H1 (cell line): ENCODE measurements at regions of chr15 and their contacts with region 1.

Region 1: GRCh38 chr15:100341662-100342560 is at the start of gene ADAMTS17:
- DNase-seq: peak; percentile 87 to 91
- H3K4me3 ChIP-seq: peak within 1 kb of the TSS; percentile 32 to 82 (median 46)
- H3K27ac ChIP-seq: no peak within 1 kb of the TSS
- H3K4me1 ChIP-seq: peaks cover 0 to 6% (median 4%) of the 10 kb centered on the region in 4 experiments; a peak in 6 of 7 replicates
- H3K27me3 ChIP-seq: peaks cover 17 to 30% (median 26%) of the 10 kb centered on the region in 4 experiments
- CTCF ChIP-seq: peak; percentile 77 to 85 (median 82)
- EP300 ChIP-seq: peak in 1 of 2 experiments; percentile 23; a peak in 1 of 3 replicates
- POLR2A ChIP-seq: peak in 1 of 2 experiments; percentile 27; a peak in 1 of 3 replicates
- RAD21 ChIP-seq: peak; percentile 62 to 70
- total RNA-seq, gene ADAMTS17: 1.7 and 1.9 TPM in 2 replicates

Region 2: GRCh38 chr15:99961011-99961441 is 380.9 kb before region 1 on chr15:
- CTCF ChIA-PET with region 1: interaction called, 14 read pairs
- POLR2A ChIA-PET with region 1: no interaction called
- DNase-seq: peak in 1 of 2 experiments; percentile 77
- H3K4me3 ChIP-seq: no peak overlapping the region
- H3K27ac ChIP-seq: no peak overlapping the region
- H3K4me1 ChIP-seq: peaks cover 0 to 2% (median under 1%) of the 10 kb centered on the region in 4 experiments; a peak in 1 of 7 replicates
- H3K27me3 ChIP-seq: peaks cover 0 to 2% (median 0%) of the 10 kb centered on the region in 4 experiments; a peak in 1 of 7 replicates
- CTCF ChIP-seq: peak in 2 of 3 experiments; percentile 50 to 62; a peak in 3 of 4 replicates
- EP300 ChIP-seq: no peak
- POLR2A ChIP-seq: no peak
- RAD21 ChIP-seq: peak; percentile 65 to 72

Region 3: GRCh38 chr15:99981191-99981647 is 360.7 kb before region 1 on chr15:
- CTCF ChIA-PET with region 1: interaction called, 15 read pairs
- POLR2A ChIA-PET with region 1: no interaction called
- DNase-seq: no peak
- H3K4me3 ChIP-seq: no peak overlapping the region
- H3K27ac ChIP-seq: no peak overlapping the region
- H3K4me1 ChIP-seq: peaks cover 15 to 36% (median 25%) of the 10 kb centered on the region in 4 experiments
- H3K27me3 ChIP-seq: no peaks in the 10 kb centered on the region
- CTCF ChIP-seq: peak; percentile 38 to 71 (median 57)
- EP300 ChIP-seq: no peak
- POLR2A ChIP-seq: no peak
- RAD21 ChIP-seq: peak; percentile 47 to 56

Region 4: GRCh38 chr15:100279446-100279845 is 62.5 kb before region 1 on chr15:
- CTCF ChIA-PET with region 1: interaction called, 13 read pairs
- POLR2A ChIA-PET with region 1: no interaction called
- DNase-seq: no peak
- H3K4me3 ChIP-seq: no peak overlapping the region
- H3K27ac ChIP-seq: no peak overlapping the region
- H3K4me1 ChIP-seq: no peaks in the 10 kb centered on the region
- H3K27me3 ChIP-seq: no peaks in the 10 kb centered on the region
- CTCF ChIP-seq: no peak
- EP300 ChIP-seq: no peak
- POLR2A ChIP-seq: no peak
- RAD21 ChIP-seq: no peak